IMR-90 (cell line): ENCODE measurements at regions of chr4 and their contacts with region 1.

Region 1: GRCh38 chr4:76607266-76607799 is 172.3 kb downstream of the SHROOM3 start:
- DNase-seq: peak; percentile 47
- ATAC-seq: peak; percentile 41; the same call in 1 of the 2 replicates
- H3K4me3 ChIP-seq: no peak overlapping the region
- H3K27ac ChIP-seq: no peak overlapping the region
- H3K4me1 ChIP-seq: peaks cover 13% of the 10 kb centered on the region
- H3K27me3 ChIP-seq: no peaks in the 10 kb centered on the region
- CTCF ChIP-seq: no peak
- POLR2A ChIP-seq: no peak
- RAD21 ChIP-seq: no peak

Region 2: DNA sequence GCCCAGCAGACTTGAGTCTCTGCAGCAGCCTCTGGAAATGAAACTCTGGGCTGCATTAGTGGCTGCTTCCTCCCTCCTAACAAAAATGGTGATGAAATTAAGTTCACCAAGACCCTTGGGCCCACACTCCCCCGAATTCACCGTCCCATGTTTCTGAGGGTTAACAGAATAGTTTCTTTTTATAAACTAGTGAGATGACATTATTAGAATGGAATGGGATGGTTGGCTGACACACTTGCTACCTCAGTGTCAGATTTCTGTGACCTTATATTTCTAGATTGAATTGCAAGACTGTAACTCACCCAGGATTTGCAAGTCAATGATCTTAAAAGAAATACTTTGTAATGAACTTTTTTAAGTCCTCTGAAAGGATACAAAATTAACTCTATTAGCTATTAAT is 45.2 kb before region 1 on chr4:
- CTCF ChIA-PET with region 1: no interaction called
- POLR2A ChIA-PET with region 1: no interaction called
- dilution Hi-C with region 1: no loop called
- in situ Hi-C with region 1: no loop called
- intact Hi-C with region 1: loop called (anchors 5 kb)
- DNase-seq: peak; percentile 91
- ATAC-seq: peak; percentile 76
- H3K4me3 ChIP-seq: no peak overlapping the region
- H3K27ac ChIP-seq: peak overlapping the region; percentile 54
- H3K4me1 ChIP-seq: peaks cover 17% of the 10 kb centered on the region
- H3K27me3 ChIP-seq: no peaks in the 10 kb centered on the region
- CTCF ChIP-seq: no peak
- POLR2A ChIP-seq: no peak
- RAD21 ChIP-seq: no peak

Region 3: DNA sequence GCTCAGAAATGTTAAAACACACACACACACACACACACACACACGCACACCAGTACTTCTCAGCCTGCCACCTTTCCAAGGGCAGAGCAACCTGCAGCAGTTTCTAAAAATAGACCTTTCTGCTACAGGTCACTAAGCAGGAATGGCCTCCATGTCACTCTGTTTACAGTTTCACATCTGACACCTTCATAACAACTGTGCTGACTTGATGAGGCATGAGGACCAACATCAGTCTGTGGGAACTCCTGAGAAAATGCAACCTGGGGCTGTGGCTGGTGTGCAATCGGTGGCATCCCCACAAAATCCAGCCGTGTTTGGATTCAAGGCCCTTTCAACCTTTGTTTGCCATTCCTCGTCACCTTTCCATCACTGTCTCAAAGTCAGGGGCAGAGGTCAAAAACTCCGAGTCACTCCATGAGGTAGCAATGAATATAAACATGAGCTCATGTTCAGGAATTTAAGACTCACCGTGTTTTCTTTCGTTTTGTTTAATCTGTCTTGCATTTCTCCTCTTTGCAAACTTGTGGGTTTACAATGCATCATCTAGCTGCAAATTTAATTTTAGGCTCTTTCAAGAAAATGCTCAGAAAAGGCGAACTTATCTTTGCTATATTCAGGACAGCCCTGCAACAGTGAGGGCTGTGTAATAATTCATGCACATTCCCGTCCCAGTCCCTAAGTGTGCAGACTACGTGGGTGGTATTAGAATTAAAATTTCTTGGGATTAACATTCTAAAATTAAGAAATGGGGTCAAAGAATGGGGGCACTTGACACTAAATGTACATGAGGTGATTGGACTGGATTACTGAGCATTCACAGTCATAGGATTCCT is 37.0 kb before region 1 on chr4:
- CTCF ChIA-PET with region 1: no interaction called
- POLR2A ChIA-PET with region 1: no interaction called
- dilution Hi-C with region 1: no loop called
- in situ Hi-C with region 1: no loop called
- intact Hi-C with region 1: loop called (anchors 5 kb)
- DNase-seq: peak; percentile 89
- ATAC-seq: peak; percentile 90
- H3K4me3 ChIP-seq: no peak overlapping the region
- H3K27ac ChIP-seq: peak overlapping the region; percentile 6
- H3K4me1 ChIP-seq: peaks cover 13% of the 10 kb centered on the region
- H3K27me3 ChIP-seq: no peaks in the 10 kb centered on the region
- CTCF ChIP-seq: no peak
- POLR2A ChIP-seq: no peak
- RAD21 ChIP-seq: no peak; the same call in 1 of the 2 replicates

Region 4: DNA sequence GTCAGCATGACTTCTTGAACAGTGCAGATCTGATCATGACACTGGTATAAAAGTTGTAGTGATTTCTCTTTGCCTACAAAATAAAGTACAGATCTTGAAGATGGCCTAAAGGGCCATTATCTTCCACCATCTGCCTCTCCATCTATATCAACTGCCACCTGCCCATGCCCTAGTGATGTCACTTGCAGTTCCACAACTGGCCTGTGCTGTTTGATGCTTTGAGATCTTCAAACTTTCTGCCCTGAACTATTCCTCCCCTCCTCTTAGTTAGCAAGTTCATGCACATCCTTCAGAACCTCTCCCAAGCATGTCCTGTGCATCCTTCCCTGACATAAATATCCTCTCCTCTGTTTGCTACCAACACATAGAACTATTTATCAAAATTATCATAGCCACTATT is 73.6 kb after region 1 on chr4:
- CTCF ChIA-PET with region 1: no interaction called
- POLR2A ChIA-PET with region 1: no interaction called
- dilution Hi-C with region 1: no loop called
- in situ Hi-C with region 1: no loop called
- intact Hi-C with region 1: no loop called
- DNase-seq: no peak
- ATAC-seq: no peak
- H3K4me3 ChIP-seq: no peak overlapping the region
- H3K27ac ChIP-seq: no peak overlapping the region
- H3K4me1 ChIP-seq: no peaks in the 10 kb centered on the region
- H3K27me3 ChIP-seq: no peaks in the 10 kb centered on the region
- CTCF ChIP-seq: no peak
- POLR2A ChIP-seq: no peak
- RAD21 ChIP-seq: no peak

Region 5: DNA sequence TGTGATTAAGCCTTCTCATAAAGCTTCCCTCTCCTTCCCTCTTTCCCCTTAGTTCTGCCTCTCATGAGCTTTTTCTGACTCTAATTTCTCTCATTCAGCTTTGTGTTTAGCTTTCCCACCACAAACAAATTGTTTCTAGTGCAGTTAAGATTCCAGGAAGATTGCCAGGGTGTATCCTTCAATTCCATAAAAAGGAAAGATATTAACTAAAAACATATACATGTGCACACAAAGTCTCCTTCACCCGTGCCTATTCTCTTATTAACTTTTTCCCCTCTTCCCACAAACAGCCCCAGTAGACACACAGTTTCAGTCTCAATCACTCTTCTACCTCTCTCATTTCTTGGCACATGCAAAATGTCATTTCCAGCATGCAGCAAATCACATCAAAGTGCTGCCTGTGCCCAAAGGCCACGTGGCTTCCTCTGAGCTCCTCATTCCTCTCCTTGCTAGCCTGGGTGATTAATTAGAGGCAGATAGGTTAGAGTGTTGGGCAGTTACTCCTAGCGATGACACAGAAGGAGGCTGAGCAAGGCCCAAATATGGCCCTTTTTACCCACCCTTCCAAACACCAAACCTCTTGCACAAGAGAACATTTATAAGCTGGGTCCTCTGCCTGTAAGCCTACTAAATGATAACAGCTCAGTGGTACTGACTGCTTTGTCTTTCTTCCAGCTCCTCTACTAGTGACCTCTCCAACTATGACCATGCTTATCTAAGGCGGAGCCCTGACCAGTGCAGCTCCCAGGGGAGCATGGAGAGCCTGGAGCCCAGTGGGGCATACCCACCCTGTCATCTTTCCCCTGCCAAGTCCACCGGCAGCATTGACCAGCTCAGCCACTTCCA is 131.0 kb after region 1 on chr4:
- CTCF ChIA-PET with region 1: no interaction called
- POLR2A ChIA-PET with region 1: no interaction called
- dilution Hi-C with region 1: no loop called
- in situ Hi-C with region 1: no loop called
- intact Hi-C with region 1: loop called (anchors 5 kb)
- DNase-seq: peak; percentile 92
- ATAC-seq: peak; percentile 77
- H3K4me3 ChIP-seq: no peak overlapping the region
- H3K27ac ChIP-seq: peak overlapping the region; percentile 87
- H3K4me1 ChIP-seq: peaks cover 36% of the 10 kb centered on the region
- H3K27me3 ChIP-seq: no peaks in the 10 kb centered on the region
- CTCF ChIP-seq: no peak
- POLR2A ChIP-seq: peak; percentile 30; the same call in 1 of the 2 replicates
- RAD21 ChIP-seq: no peak

Region 6: GRCh38 chr4:76748649-76749048 is 141.3 kb after region 1 on chr4:
- CTCF ChIA-PET with region 1: no interaction called
- POLR2A ChIA-PET with region 1: interaction called, 5 read pairs
- dilution Hi-C with region 1: no loop called
- in situ Hi-C with region 1: no loop called
- intact Hi-C with region 1: loop called (anchors 5 kb)
- DNase-seq: peak; percentile 41
- ATAC-seq: no peak
- H3K4me3 ChIP-seq: no peak overlapping the region
- H3K27ac ChIP-seq: no peak overlapping the region
- H3K4me1 ChIP-seq: peaks cover 11% of the 10 kb centered on the region
- H3K27me3 ChIP-seq: no peaks in the 10 kb centered on the region
- CTCF ChIP-seq: peak; percentile 41
- POLR2A ChIP-seq: no peak
- RAD21 ChIP-seq: peak; percentile 64